Activated CD8-positive, alpha-beta T cell treated with anti-CD3 and anti-CD28 coated beads, Interleukin-2, amount 10 ng/mL, durations not matched to agents 7 days and 5 days (primary cell): ENCODE measurements at regions of chr7 and their contacts with region 1.

Region 1: GRCh38 chr7:116525913-116526861 is 1.4 kb downstream of the CAV1 start:
- DNase-seq: peak; percentile 72
- ATAC-seq: peak; percentile 97
- H3K4me3 Mint-ChIP-seq: peak overlapping the region; percentile 78
- H3K27ac Mint-ChIP-seq: no peak overlapping the region
- H3K4me1 Mint-ChIP-seq: peaks cover 22% of the 10 kb centered on the region
- H3K27me3 Mint-ChIP-seq: peaks cover 75% of the 10 kb centered on the region

Region 2: DNA sequence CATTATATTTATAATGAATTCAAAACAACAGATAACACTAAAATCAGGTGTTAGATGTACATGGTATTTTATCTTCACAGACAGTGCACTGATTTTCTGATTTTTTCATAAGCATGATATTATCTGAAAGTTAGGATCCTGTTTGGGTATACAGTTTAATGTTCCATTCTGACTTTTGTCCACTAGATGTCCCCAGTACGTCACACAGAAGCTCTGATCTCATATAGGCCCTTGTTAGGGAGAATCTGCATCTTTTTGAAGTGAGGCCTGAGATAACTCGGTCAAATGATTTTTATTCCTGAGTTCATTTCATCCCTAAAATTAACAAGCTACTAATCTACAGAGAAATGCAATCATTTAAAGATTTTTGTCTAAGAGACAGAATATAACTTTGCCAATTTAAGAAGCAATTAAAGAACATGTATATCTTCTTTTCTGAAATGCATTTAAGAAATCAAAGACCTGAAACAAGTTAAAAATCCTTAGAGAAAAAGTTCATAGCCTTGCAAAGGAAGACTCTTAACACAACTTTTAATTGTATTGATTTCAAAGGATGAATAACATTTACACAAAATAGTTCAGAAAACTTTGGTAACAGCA is 387.9 kb before region 1 on chr7:
- CTCF ChIA-PET with region 1: interaction called, 18 read pairs
- POLR2A ChIA-PET with region 1: no interaction called
- DNase-seq: peak; percentile 64
- ATAC-seq: peak; percentile 92
- H3K4me3 Mint-ChIP-seq: no peak overlapping the region
- H3K27ac Mint-ChIP-seq: no peak overlapping the region
- H3K4me1 Mint-ChIP-seq: peaks cover 34% of the 10 kb centered on the region
- H3K27me3 Mint-ChIP-seq: peaks cover 16% of the 10 kb centered on the region

Region 3: GRCh38 chr7:116367221-116367813 is 158.9 kb before region 1 on chr7:
- CTCF ChIA-PET with region 1: no interaction called
- POLR2A ChIA-PET with region 1: no interaction called
- DNase-seq: no peak
- ATAC-seq: no peak
- H3K4me3 Mint-ChIP-seq: no peak overlapping the region
- H3K27ac Mint-ChIP-seq: no peak overlapping the region
- H3K4me1 Mint-ChIP-seq: no peaks in the 10 kb centered on the region
- H3K27me3 Mint-ChIP-seq: peaks cover 5% of the 10 kb centered on the region

Region 4: DNA sequence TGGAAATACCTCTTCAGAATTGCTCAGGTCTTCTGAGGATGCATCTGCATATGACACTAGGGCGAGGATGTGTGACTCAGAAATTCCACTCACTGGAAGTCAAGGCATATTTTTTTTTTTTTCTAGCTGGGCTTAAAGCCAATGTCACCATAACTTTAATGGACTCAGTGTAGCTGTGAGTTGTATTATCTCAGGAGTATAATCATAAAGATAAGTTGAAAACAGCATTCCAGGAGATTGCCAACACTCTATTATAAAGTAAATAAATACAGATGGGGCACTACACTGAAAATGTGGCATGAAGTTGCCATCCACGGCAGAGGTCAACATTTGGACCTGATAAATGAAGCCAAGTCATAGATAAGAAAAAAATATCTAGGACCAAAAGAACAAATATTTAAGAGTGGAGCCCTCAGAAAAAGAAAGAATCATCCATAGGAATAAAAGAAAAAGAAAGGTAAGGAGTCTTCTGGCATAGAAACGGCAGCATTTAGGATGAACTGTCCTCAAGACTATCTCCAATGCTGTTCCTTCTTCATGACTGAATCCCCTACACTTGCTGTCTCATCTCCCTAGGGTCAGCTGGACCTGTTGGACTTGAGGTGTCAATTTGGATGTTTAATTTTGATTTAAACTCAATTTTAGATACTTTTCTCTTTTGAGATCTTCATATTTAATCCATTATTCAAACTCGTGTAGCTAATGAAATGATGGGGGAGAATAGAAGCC is 99.6 kb before region 1 on chr7:
- CTCF ChIA-PET with region 1: no interaction called
- POLR2A ChIA-PET with region 1: no interaction called
- DNase-seq: no peak
- ATAC-seq: no peak
- H3K4me3 Mint-ChIP-seq: no peak overlapping the region
- H3K27ac Mint-ChIP-seq: no peak overlapping the region
- H3K4me1 Mint-ChIP-seq: no peaks in the 10 kb centered on the region
- H3K27me3 Mint-ChIP-seq: no peaks in the 10 kb centered on the region

Region 5: DNA sequence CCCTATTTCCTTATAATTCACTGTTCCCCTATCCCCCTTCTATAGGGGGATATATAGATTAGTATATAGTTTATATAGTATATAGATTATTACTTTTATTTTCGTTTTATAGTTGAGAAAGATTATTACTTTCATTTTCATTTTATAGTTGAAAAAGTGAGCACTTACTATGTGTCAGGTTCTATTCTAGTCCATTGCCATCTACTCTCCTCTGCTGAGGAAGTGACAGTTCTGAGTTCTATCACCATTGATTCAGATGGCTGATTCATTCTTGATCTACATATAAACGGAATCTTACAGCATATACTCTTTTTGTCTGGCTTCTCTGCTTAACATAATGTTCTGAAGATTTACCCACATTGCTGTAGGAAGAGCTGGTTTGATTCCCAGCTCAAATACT is 47.4 kb before region 1 on chr7:
- CTCF ChIA-PET with region 1: no interaction called
- POLR2A ChIA-PET with region 1: no interaction called
- DNase-seq: no peak
- ATAC-seq: no peak
- H3K4me3 Mint-ChIP-seq: no peak overlapping the region
- H3K27ac Mint-ChIP-seq: no peak overlapping the region
- H3K4me1 Mint-ChIP-seq: no peaks in the 10 kb centered on the region
- H3K27me3 Mint-ChIP-seq: peaks cover 3% of the 10 kb centered on the region

Region 6: DNA sequence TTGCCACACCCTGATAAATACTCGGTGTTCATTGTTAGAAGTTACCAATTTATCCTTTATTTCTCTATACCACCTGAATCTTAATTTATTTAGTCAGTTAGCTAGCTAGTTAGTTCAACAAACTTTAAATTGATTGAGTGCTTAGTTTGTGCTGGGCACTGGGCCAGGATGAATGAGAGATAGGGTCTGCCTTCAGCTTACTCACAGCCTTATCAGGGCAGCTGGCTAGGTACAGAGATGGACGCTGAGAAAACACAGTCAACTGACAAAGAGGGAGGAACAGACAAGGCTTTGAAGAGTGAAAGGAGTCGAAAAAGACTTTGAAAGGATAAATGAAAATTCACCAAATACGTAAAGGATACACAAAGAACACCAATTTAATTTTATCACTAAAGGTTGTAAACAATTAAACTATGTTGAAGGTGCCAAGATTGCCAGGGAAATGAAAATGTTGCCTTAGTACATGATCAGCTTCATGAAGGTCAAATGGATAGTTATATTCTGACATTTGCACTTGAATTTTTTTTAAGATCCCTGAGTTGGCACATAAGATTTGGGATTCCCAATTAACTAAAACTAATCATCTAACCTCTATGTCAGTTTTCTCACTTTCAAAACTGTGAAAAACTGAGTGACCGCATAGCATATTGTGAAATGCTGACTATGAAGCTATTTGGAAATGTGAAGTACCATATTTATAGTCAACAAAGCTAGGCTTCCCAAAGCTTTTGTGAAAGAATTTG is 24.6 kb before region 1 on chr7:
- CTCF ChIA-PET with region 1: interaction called, 10 read pairs
- POLR2A ChIA-PET with region 1: no interaction called
- DNase-seq: no peak
- ATAC-seq: no peak
- H3K4me3 Mint-ChIP-seq: no peak overlapping the region
- H3K27ac Mint-ChIP-seq: no peak overlapping the region
- H3K4me1 Mint-ChIP-seq: peaks cover 10% of the 10 kb centered on the region
- H3K27me3 Mint-ChIP-seq: peaks cover 58% of the 10 kb centered on the region